ENCODE measurements at regions of chr16 and their contacts with region 1.

Region 1: DNA sequence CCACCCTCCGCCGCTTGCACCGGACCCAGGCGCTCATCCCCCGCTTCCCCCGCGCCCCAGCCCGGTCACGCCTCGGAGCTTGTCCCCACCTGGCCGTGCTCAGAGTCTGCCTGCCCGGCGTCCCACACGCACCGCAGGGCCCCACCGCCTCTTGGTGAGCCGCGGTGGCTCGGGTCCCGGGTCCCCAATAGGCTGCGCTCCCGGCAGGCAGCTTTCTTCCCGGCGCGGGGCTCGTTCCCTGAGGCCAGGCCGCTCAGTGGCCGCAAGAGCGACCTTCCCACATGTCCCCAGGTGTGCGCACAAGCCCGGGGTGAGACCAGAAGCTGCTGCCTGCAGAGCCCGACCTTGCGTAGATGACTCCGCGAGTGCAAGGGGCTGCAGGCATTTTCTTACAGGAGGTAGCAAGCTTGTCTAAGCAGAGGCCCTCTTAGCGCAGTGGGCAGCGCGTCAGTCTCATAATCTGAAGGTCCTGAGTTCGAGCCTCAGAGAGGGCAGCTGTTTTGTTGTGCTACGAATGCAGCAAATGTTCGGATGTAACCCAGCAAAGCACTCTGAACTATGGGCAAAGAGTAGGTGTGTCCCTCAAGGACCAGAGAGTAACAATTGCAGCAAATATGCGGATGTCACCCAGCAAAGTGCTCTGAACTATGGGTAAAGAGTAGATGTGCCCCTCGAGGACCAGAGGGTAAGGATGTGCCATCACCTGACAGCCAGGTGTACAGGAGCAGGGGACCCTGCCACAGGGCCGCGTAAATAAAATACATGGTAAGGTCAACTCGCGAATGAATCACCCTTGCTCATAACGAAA is 15.6 kb downstream of the TLE7 start:
- DNase-seq: peak; percentile 46
- CTCF ChIP-seq: no peak

Region 2: DNA sequence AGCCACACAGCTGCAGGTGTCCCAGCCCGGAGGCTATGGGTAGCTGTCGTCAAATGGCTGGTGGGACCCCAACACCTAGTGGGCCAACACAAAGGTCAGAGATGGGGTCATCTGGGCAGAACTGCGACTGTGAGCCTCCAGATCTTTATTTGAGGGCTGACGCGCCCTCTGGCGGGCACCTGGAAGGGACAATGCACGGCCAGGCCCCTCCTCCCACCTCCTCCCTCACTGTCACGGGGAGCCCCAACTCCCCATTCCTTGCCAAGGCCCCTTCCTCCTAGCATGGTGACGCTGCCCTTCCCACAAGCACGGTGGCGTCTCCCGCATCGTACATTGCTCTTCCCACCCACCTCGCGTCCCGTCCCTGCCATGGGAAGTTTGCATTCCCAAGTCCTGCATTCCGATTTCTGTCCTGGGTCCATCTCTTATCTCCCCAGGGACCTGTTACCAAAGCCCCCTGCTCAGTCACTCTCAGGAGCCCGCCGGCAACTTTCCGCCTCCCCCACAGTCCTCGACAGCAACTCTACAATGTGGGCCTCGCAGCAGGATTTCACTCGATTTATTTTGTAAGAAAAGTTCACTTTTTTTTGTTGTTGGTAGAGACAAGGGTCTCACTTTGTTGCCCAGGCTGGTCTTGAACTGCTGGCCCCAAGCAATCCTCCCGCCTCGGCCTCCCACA is 14.5 kb after region 1 on chr16:
- CTCF ChIA-PET with region 1: interaction called, 10 read pairs
- POLR2A ChIA-PET with region 1: no interaction called
- DNase-seq: peak; percentile 67
- CTCF ChIP-seq: no peak